PC-9 (cell line): ENCODE measurements at regions of chr17 and their contacts with region 1.

Region 1: DNA sequence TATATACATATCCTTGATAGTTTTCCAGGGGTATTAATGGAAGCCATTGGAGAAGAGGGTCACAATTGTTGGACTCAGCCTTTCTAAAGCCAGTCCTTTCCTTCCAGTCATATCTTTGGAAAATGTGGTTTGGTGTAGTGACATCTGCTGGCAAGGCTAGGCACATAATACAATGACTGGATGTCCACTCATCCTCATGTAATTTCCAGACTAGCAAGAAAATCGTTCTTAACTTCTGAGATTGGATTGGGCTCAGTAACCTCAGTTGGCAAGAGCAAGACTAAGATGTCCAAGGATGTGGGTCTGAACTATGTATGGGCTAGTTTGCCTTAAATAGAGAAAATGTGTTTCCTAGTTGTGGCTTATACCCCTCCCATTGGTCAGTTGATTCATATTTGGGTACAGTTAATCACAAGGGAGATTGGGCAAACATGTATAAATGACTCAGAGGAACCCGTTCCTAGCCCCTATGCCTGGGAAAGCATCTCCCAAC is 8.7 kb upstream of the KAT7 start:
- DNase-seq: peak; percentile 6 to 55
- H3K4me3 ChIP-seq: no peak overlapping the region
- H3K27ac ChIP-seq: no peak overlapping the region
- H3K4me1 ChIP-seq: no peaks in the 10 kb centered on the region
- H3K27me3 ChIP-seq: peaks cover 18% of the 10 kb centered on the region; the same call in 1 of the 2 replicates
- CTCF ChIP-seq: peak; percentile 68

Region 2: GRCh38 chr17:49670002-49670401 is 109.8 kb before region 1 on chr17:
- CTCF ChIA-PET with region 1: no interaction called
- POLR2A ChIA-PET with region 1: interaction called, 12 read pairs
- intact Hi-C with region 1: no loop called
- DNase-seq: no peak
- H3K4me3 ChIP-seq: no peak overlapping the region
- H3K27ac ChIP-seq: no peak overlapping the region
- H3K4me1 ChIP-seq: no peaks in the 10 kb centered on the region
- H3K27me3 ChIP-seq: no peaks in the 10 kb centered on the region
- CTCF ChIP-seq: no peak

Region 3: DNA sequence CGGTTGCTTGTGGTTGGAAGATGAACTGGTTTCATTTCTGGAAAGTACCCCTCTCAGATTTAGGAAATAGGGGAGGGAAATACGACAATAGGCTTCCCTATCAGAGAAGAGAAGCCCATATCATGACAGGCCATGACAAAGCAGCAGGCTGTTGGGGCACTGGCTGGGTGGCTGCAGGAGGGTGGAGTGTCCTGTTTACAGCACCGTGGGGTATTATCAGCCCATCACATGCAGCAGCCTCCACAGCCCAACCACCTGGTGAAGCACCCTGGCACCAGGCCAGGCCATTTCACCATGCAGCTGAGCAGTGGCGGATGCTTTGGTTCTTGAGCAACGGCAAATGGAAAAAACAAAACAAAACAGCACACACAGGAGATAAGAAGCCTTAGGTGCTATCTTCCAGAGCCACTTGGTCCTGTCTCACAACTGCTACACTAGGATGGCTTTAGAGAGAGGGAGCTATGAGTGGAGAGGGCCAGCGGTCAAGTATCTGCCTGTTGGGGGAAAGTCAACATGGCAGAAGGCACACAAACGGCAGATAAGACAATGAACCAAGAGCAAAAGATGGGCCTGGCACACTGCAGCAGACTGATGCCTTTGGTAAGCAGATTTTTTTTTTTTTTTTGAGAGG is 40.0 kb before region 1 on chr17:
- CTCF ChIA-PET with region 1: no interaction called
- POLR2A ChIA-PET with region 1: no interaction called
- intact Hi-C with region 1: no loop called
- DNase-seq: peak in 1 of 2 experiments; percentile 4
- H3K4me3 ChIP-seq: no peak overlapping the region
- H3K27ac ChIP-seq: no peak overlapping the region
- H3K4me1 ChIP-seq: 0 out of 2 replicates have a peak, but pooled peaks cover 10% of the 10 kb centered on the region
- H3K27me3 ChIP-seq: no peaks in the 10 kb centered on the region
- CTCF ChIP-seq: no peak